ENCODE measurements at regions of chr1 and their contacts with region 1.

Region 1: DNA sequence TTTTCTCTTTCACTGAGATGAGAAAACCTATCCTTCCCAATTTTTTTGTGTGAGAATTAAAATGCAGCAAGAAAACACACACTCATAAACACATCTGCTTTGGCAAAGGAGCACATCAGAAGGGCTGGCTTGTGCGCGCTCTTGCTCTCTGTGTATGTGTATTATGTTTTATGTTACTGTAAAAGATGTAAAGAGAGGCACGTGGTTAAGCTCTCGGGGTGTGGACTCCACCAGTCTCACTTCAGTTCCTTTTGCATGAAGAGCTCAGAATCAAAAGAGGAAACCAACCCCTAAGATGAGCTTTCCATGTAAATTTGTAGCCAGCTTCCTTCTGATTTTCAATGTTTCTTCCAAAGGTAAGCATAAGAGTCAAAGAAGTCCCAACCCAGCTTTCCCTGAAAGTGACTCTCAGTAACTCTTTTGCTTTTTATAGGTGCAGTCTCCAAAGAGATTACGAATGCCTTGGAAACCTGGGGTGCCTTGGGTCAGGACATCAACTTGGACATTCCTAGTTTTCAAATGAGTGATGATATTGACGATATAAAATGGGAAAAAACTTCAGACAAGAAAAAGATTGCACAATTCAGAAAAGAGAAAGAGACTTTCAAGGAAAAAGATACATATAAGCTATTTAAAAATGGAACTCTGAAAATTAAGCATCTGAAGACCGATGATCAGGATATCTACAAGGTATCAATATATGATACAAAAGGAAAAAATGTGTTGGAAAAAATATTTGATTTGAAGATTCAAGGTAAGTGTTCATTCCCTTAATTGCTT is at the start of gene CD2:
- DNase-seq: peak in 3 of 5 donors; percentile 55 to 71 (median 70)
- H3K4me3 ChIP-seq: peak within 1 kb of the TSS; percentile 85
- H3K4me3 Mint-ChIP-seq: peak within 1 kb of the TSS; percentile 97 to 100 (median 99)
- H3K27ac ChIP-seq: peak within 1 kb of the TSS; percentile 76
- H3K27ac Mint-ChIP-seq: peak within 1 kb of the TSS; percentile 95 to 99 (median 98)
- H3K4me1 ChIP-seq: peaks cover 35% of the 10 kb centered on the region
- H3K4me1 Mint-ChIP-seq: peaks cover 35 to 48% (median 45%) of the 10 kb centered on the region in 3 donors
- H3K27me3 ChIP-seq: no peaks in the 10 kb centered on the region
- H3K27me3 Mint-ChIP-seq: peaks cover 0 to 2% of the 10 kb centered on the region in 2 donors
- total RNA-seq, gene CD2: 353 to 364 TPM

Region 2: GRCh38 chr1:116717318-116717717 is 37.1 kb before region 1 on chr1:
- CTCF ChIA-PET with region 1: no interaction called
- POLR2A ChIA-PET with region 1: no interaction called
- DNase-seq: no peak
- H3K4me3 ChIP-seq: no peak overlapping the region
- H3K4me3 Mint-ChIP-seq: no peak overlapping the region
- H3K27ac ChIP-seq: no peak overlapping the region
- H3K27ac Mint-ChIP-seq: no peak overlapping the region
- H3K4me1 ChIP-seq: no peaks in the 10 kb centered on the region
- H3K4me1 Mint-ChIP-seq: no peaks in the 10 kb centered on the region
- H3K27me3 ChIP-seq: no peaks in the 10 kb centered on the region
- H3K27me3 Mint-ChIP-seq: peaks cover 6 to 15% of the 10 kb centered on the region in 2 donors

Region 3: GRCh38 chr1:116769561-116769977 is 15.2 kb after region 1 on chr1:
- CTCF ChIA-PET with region 1: interaction called, 41 read pairs
- POLR2A ChIA-PET with region 1: interaction called, 165 read pairs
- DNase-seq: peak; percentile 56 to 89 (median 88)
- H3K4me3 ChIP-seq: peak overlapping the region; percentile 41
- H3K4me3 Mint-ChIP-seq: peak overlapping the region; percentile 34 to 97 (median 82)
- H3K27ac ChIP-seq: peak overlapping the region; percentile 40
- H3K27ac Mint-ChIP-seq: peak overlapping the region; percentile 98 to 100 (median 98)
- H3K4me1 ChIP-seq: peaks cover 87% of the 10 kb centered on the region
- H3K4me1 Mint-ChIP-seq: peaks cover 88 to 92% (median 91%) of the 10 kb centered on the region in 3 donors
- H3K27me3 ChIP-seq: no peaks in the 10 kb centered on the region
- H3K27me3 Mint-ChIP-seq: no peaks in the 10 kb centered on the region

Region 4: DNA sequence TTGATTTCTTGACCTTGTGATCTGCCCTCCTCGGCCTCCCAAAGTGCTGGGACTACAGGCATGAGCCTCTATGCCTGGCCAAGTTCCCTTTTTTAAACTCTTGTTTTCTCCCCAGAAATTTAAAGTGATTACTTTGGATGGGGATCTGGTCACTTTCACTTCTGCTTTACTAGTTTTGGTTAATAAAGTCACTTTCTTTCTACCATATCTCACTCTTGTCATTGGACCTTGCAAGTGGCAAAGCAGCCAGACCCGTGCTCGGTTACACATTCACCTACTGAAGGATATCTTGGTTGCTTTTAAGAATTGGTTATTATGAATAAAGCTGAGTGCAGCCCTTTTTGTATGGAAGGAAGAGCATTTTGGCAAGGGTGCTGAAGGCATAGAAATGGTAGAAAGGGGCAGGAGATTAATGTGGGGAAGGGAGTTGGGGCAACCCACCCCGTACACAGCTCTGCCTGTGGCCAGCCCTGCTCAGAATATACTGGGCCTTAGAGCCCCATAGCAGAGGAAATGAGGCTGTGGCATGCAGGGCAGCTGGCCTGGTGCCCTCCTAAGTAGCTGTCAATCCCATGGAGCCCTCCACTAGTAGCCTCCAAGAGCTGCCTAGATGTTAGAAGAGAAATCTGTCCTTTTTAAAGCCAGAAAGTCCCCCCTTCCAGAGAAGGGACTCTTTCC is 40.6 kb after region 1 on chr1:
- CTCF ChIA-PET with region 1: no interaction called
- POLR2A ChIA-PET with region 1: interaction called, 10 read pairs
- DNase-seq: no peak
- H3K4me3 ChIP-seq: no peak overlapping the region
- H3K4me3 Mint-ChIP-seq: peak overlapping the region in 1 of 7 donors; percentile 3
- H3K27ac ChIP-seq: no peak overlapping the region
- H3K27ac Mint-ChIP-seq: peak overlapping the region in 6 of 8 donors; percentile 26 to 68 (median 60)
- H3K4me1 ChIP-seq: peaks cover 37% of the 10 kb centered on the region
- H3K4me1 Mint-ChIP-seq: peaks cover 60 to 80% (median 79%) of the 10 kb centered on the region in 3 donors
- H3K27me3 ChIP-seq: no peaks in the 10 kb centered on the region
- H3K27me3 Mint-ChIP-seq: no peaks in the 10 kb centered on the region

Region 5: DNA sequence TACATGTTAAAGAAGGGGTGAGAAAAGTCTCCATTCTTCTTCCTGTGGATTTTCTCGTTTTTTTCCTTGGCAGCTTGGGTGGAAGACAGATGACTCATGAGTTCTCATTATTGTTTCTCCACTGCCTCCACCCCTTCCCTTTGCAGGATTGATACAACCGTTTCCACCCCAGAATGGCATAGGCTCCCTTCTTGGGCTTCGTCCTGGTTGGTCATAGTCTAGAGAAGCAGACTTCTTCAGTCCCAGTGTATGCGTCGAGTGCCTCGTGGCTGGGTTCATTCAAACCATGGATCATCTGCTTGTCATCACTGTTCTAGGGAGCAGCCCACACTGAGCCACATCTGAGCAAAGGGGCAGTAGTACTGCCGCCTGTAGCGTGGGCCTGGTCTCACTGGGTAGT is 169.0 kb after region 1 on chr1:
- CTCF ChIA-PET with region 1: no interaction called
- POLR2A ChIA-PET with region 1: no interaction called
- DNase-seq: no peak
- H3K4me3 ChIP-seq: no peak overlapping the region
- H3K4me3 Mint-ChIP-seq: no peak overlapping the region
- H3K27ac ChIP-seq: no peak overlapping the region
- H3K27ac Mint-ChIP-seq: no peak overlapping the region
- H3K4me1 ChIP-seq: no peaks in the 10 kb centered on the region
- H3K4me1 Mint-ChIP-seq: no peaks in the 10 kb centered on the region
- H3K27me3 ChIP-seq: no peaks in the 10 kb centered on the region
- H3K27me3 Mint-ChIP-seq: peaks cover 3 to 23% of the 10 kb centered on the region in 2 donors